K562 (cell line): ENCODE measurements at regions of chr17 and their contacts with region 1.

Region 1: DNA sequence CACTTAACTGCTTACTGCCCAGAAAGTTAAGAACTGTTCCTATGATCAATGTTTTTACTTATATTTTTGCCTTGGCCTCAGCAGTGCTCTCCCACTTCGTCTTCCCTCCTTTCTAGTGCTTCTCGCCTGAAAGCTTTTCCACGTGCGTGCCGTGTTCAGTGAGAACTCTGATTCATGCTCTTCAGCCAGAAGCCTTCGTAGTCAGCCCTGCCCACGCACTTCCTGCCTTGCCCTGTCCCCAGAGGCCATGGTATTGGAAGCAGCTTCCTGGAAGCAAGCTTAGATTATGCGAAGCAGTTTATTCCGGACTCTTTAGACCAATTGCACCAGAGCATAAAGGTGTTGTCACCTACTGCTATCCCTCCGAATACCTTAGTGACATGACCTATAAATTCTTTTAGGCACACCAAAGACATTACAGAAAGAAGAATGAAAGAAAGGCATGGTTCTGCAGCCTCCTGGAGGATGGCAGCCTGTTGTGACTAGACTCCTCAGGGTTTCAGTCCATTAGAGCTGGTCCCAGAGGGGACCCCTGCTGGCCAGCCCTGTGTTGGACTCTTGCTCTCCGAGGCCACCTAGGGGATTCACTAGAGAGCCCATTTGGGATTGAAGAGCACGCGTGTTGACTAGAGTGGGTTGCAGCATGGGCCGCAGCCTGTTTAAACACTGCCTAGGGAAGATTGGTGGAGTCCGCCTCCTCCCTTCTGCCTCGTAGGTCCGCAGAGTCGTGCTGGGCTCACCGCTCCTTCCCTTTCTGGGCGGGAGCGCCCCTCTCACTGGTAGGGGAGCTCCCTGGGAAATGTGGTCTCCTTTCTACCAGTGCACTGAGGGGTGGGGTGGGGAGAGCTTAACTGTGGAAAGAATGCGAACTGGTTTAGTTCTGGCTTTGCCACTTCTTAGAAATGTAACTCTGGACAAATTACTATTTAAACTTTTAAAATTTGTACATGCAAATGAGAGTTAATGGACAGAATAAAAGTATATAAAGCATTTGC is 105.3 kb downstream of the RPTOR start:
- DNase-seq: peak; percentile 54 to 78 (median 68)
- ATAC-seq: peak; percentile 100
- H3K4me3 ChIP-seq: no peak overlapping the region
- H3K27ac ChIP-seq: no peak overlapping the region; the same call in 2 of the 3 replicates
- H3K4me1 ChIP-seq: peaks cover 17 to 18% of the 10 kb centered on the region in 2 experiments
- H3K27me3 ChIP-seq: no peaks in the 10 kb centered on the region
- CTCF ChIP-seq: peak; percentile 98 to 100 (median 100)
- EP300 ChIP-seq: no peak
- POLR2A ChIP-seq: no peak
- RAD21 ChIP-seq: peak; percentile 50 to 74

Region 2: GRCh38 chr17:80575057-80575875 is 74.7 kb before region 1 on chr17:
- CTCF ChIA-PET with region 1: interaction called, 6 read pairs
- POLR2A ChIA-PET with region 1: no interaction called
- in situ Hi-C with region 1: no loop called
- intact Hi-C with region 1: loop called (anchors 5 kb)
- DNase-seq: peak; percentile 88 to 94 (median 92)
- ATAC-seq: peak; percentile 100
- H3K4me3 ChIP-seq: no peak overlapping the region
- H3K27ac ChIP-seq: no peak overlapping the region
- H3K4me1 ChIP-seq: peaks cover 4 to 20% of the 10 kb centered on the region in 2 experiments; a peak in 4 of 5 replicates
- H3K27me3 ChIP-seq: no peaks in the 10 kb centered on the region
- CTCF ChIP-seq: peak; percentile 100
- EP300 ChIP-seq: peak; percentile 41; the same call in 1 of the 2 replicates
- POLR2A ChIP-seq: no peak
- RAD21 ChIP-seq: peak; percentile 81 to 97

Region 3: DNA sequence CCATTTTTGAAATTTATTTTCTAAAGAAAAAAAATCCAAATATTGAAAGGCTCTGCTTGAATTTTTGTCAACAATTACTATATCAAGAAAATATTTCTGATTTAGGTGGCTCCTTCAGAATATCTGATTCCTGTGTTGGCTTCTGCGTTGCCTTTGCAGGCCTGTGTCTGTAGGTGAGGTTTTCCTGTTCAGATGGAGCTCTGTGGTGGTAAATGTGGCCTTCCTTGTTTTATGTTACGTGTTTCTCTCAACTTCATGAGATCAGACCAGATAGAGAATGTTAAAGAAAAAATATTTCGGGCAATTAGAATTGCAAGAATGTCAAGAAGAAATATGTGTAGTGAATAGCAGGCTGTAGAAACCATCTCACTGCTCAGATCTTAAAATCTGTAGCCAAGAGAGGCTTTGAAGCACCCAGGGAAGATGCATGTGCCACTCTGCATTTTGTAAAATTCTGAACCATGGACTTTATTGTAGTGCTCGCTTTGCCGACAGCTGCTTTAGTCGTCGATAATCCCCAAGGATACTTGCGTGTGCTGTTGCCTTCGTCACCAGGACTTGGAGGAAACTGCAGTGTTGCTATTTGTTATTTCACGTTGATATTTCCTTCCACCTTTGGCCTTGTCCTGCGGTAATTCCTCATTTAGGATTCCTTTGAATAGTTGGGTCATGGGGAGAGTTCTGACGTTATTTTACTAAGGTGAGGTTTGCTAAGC is 35.5 kb before region 1 on chr17:
- CTCF ChIA-PET with region 1: no interaction called
- POLR2A ChIA-PET with region 1: no interaction called
- in situ Hi-C with region 1: no loop called
- intact Hi-C with region 1: no loop called
- DNase-seq: no peak
- ATAC-seq: no peak
- H3K4me3 ChIP-seq: no peak overlapping the region
- H3K27ac ChIP-seq: no peak overlapping the region
- H3K4me1 ChIP-seq: no peaks in the 10 kb centered on the region
- H3K27me3 ChIP-seq: no peaks in the 10 kb centered on the region
- CTCF ChIP-seq: no peak
- EP300 ChIP-seq: no peak
- POLR2A ChIP-seq: no peak
- RAD21 ChIP-seq: no peak